RWPE1 (cell line): ENCODE measurements at regions of chr2 and their contacts with region 1.

Region 1: DNA sequence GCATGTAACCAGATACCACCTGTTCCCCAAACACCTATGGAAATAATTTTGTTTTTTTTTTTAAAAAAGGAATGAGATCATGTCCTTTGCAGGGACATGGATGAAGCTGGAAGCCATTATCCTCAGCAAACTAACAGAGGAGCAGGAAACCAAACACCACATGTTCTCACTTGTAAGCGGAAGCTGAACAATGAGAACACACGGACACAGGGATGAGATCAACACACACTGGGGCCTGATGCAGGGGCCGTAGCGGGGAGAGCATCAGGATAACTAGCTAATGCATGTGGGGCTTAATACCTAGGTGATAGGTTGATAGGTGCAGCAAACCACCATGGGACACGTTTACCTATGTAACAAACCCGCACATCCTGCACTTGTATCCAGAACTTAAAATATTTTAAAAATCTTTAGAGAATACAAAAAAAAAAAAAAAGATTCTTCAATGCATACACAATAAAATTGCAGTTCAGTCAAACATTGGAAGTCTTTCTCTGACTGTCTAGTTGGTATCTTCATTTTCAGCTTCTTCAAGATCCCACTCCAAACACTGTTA is 11.6 kb upstream of the CASP10 start:
- DNase-seq: no peak
- H3K27ac ChIP-seq: no peak overlapping the region
- CTCF ChIP-seq: no peak

Region 2: GRCh38 chr2:200993097-200993496 is 178.2 kb before region 1 on chr2:
- CTCF ChIA-PET with region 1: interaction called, 11 read pairs
- POLR2A ChIA-PET with region 1: no interaction called
- DNase-seq: no peak
- H3K27ac ChIP-seq: no peak overlapping the region
- CTCF ChIP-seq: no peak